Spleen (tissue), 13 donors: ENCODE measurements at regions of chr12 and their contacts with region 1.

Region 1: GRCh38 chr12:3041558-3042164 is 35.5 kb upstream of the TSPAN9 start:
- DNase-seq: peak; percentile 74
- H3K4me3 ChIP-seq: no peak overlapping the region
- H3K27ac ChIP-seq: no peak overlapping the region
- H3K4me1 ChIP-seq: peaks cover 12 to 20% (median 16%) of the 10 kb centered on the region in 6 donors
- H3K27me3 ChIP-seq: peaks cover 0 to 25% (median 0%) of the 10 kb centered on the region in 7 donors
- CTCF ChIP-seq: peak in 10 of 11 experiments; percentile 33 to 77 (median 63)
- POLR2A ChIP-seq: no peak

Region 2: GRCh38 chr12:2884810-2885209 is 156.9 kb before region 1 on chr12:
- intact Hi-C with region 1: loop called (anchors 5 kb)
- DNase-seq: no peak
- H3K4me3 ChIP-seq: no peak overlapping the region
- H3K27ac ChIP-seq: peak overlapping the region in 3 of 8 donors; percentile 5 to 13 (median 9)
- H3K4me1 ChIP-seq: peaks cover 0 to 28% (median 6%) of the 10 kb centered on the region in 6 donors
- H3K27me3 ChIP-seq: no peaks in the 10 kb centered on the region
- CTCF ChIP-seq: no peak
- POLR2A ChIP-seq: no peak